Motor neuron (in vitro differentiated cells): ENCODE measurements at regions of chr12 and their contacts with region 1.

Region 1: DNA sequence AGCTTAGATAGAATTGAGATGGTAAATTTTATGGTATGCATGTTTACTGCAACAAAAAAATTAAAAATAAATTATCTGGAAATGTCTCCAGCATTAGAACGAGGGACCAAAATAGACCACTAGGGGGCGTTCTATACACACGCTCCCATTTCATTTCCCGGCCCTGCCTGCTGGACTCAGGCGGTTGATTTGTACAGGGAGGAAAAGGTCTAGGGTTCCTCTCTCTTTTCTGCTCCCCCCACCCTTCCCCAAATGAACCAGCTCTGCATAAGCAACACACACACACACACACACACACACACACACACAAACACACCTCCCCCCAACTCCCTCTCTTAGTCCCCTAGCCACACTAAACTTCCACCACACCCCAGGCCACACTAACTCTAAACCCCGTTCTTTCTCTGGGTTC is 7.8 kb upstream of the DTX1 start:
- ATAC-seq: peak; percentile 60 to 96 (median 80)
- H3K4me3 ChIP-seq: no peak overlapping the region
- H3K27ac ChIP-seq: no peak overlapping the region
- H3K4me1 ChIP-seq: no peaks in the 10 kb centered on the region

Region 2: DNA sequence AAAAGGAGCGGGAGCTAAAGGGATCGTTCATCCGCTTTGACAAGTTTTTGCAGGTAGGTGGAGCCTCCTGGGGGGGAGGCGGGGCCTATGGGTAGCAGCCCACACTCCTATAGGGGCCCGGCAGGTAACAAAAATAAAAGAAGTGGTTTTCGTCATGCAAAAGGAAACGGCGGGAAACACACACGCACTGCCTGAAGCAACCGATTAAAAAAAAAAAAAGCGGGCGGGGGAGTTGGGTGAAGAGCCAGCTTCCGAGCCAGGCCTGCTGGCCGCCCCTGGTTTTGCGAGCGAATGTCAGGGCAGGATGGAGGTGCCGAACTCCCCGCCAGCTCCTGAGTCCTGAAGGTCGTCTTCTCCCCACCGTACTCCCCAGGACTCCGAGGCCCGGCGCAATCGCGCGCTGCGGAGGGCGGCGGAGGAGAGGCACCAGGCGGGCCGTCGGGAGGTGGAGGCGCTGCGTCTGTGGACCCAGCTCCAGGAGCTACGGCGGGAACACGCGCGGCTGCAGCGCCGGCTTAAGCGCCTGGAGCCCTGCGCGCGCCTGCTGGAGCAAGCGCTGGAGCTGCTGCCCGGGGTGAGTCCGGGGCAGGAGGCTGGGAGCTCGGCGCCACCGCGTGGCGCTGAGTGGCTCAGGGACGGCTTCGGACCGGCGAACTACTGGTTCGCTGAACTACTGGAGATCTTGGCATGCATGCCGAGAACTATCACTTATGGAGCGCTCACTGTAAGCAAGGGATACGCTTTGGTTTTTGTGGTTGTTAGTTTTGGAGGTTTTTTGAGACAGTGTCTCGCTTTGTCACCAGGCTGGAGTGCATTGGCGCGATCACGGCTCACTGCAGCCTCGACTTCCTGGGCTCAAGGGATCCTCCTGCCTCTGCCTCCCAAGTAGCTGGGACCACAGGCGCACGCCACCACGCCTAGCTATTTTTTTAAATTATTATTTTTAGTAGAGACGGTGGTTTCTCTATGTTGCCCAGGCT is 104.4 kb after region 1 on chr12:
- in situ Hi-C with region 1: loop called in 4 of 9 experiments (anchors 10 to 25 kb)
- ATAC-seq: peak; percentile 56 to 76 (median 68)
- H3K4me3 ChIP-seq: peak overlapping the region; percentile 15 to 29 (median 29)
- H3K27ac ChIP-seq: no peak overlapping the region
- H3K4me1 ChIP-seq: peaks cover 10 to 22% of the 10 kb centered on the region in 2 donors

Region 3: GRCh38 chr12:113161414-113162016 is 112.8 kb after region 1 on chr12:
- in situ Hi-C with region 1: loop called in 5 of 9 experiments (anchors 10 to 25 kb)
- ATAC-seq: peak in 7 of 8 experiments; percentile 12 to 95 (median 92)
- H3K4me3 ChIP-seq: peak overlapping the region in 2 of 5 donors; percentile 9 to 10
- H3K27ac ChIP-seq: peak overlapping the region; percentile 67 to 88
- H3K4me1 ChIP-seq: peaks cover 27 to 29% of the 10 kb centered on the region in 2 donors

Region 4: GRCh38 chr12:113174461-113175384 is 126.0 kb after region 1 on chr12:
- in situ Hi-C with region 1: loop called in 6 of 9 experiments (anchors 10 to 25 kb)
- ATAC-seq: peak; percentile 81 to 95 (median 88)
- H3K4me3 ChIP-seq: no peak overlapping the region
- H3K27ac ChIP-seq: no peak overlapping the region
- H3K4me1 ChIP-seq: no peaks in the 10 kb centered on the region

Region 5: DNA sequence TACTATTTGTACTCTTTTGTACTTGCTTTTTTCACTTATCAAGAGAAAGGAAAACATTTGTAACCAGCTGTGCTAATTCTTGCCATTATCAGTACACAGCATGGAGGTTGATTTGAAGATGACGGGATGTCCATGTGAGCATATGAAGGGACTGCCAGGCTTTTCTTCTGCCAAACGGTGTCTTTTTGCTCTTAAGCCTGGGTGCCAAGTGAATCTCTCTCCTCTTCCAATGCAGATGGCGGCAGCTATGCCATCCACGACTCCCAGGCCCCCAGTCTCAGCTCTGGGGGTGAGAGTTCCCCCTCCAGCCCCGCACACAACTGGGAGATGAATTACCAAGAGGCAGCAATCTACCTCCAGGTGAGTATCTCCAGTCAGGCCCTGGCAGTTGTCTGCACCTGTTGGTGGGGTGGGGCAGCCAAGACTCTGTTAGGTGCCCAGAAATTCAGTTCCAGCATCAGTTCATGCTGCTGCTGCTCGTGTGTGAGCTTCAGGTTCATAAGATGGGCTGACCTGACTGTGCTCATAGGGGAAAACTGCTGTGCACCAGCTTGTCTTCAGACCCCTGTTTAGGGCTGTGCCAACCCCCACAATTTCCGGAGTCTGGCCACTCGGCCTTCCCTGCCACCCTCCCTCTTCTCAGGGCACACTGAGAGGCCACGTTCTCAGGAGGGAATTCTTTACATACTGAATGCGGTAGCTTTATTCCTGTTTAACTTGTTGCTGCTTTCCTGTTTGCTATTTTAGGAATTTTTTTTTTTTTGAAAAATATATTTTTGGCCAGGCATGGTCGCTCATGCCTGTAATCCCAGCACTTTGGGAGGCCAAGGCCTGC is 211.6 kb after region 1 on chr12:
- in situ Hi-C with region 1: no loop called
- ATAC-seq: no peak
- H3K4me3 ChIP-seq: no peak overlapping the region
- H3K27ac ChIP-seq: no peak overlapping the region
- H3K4me1 ChIP-seq: peaks cover 7 to 10% of the 10 kb centered on the region in 2 donors